T-cell (primary cell): ENCODE measurements at regions of chr5 and their contacts with region 1.

Region 1: DNA sequence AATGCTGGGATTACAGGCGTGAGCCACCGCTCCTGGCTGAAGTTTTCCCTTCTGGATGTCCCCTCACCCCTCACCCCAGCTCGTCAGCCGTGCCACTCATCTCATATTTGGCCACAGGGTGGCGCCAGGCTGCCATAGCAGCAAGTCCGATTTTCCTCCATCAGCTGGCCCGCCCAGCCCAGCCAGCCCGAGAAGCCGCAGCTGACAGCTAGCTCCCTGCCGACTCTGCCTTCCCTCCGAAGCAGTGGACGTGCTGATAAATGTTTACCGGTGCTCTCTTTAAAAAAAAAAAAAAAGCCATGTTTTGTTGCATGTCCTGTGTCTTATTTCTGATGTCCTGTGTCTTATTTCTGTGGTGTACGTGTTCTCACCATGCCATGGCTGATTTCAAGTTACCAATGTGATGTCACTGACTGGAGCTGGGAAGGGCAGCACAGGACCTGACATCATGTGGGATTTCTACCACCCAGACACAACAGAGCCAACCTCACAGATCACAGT is 58.3 kb downstream of the PFDN1 start:
- DNase-seq: peak; percentile 53 to 83 (median 71)
- ATAC-seq: peak; percentile 57 to 82 (median 74)
- H3K4me3 ChIP-seq: no peak overlapping the region
- H3K4me3 Mint-ChIP-seq: peak overlapping the region in 1 of 3 donors; percentile 50
- H3K27ac ChIP-seq: no peak overlapping the region
- H3K27ac Mint-ChIP-seq: no peak overlapping the region
- H3K4me1 ChIP-seq: peaks cover 12 to 17% of the 10 kb centered on the region in 2 experiments
- H3K4me1 Mint-ChIP-seq: peaks cover 24 to 33% (median 25%) of the 10 kb centered on the region in 3 donors
- H3K27me3 ChIP-seq: no peaks in the 10 kb centered on the region
- H3K27me3 Mint-ChIP-seq: no peaks in the 10 kb centered on the region

Region 2: DNA sequence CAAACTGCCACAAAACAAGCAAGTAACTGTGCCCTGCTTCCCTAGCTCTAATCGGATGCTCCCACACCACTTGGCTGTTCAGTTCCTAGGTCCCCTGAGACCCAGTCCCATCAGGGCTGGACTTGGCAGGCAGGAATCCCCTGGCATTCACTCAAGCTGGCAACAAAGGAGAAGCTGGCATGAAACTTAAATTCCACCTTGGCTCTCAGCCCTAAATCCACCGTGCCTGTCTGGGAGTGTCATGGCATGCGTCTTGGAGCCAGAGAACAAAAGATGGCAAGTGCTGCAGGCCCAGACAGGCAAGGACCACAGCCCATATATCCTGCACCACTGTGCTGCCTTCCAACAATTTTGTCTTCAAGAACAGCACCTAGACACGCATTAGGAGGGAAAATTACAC is 1739.8 kb before region 1 on chr5:
- CTCF ChIA-PET with region 1: no interaction called
- POLR2A ChIA-PET with region 1: no interaction called
- DNase-seq: no peak
- ATAC-seq: no peak
- H3K4me3 ChIP-seq: no peak overlapping the region
- H3K4me3 Mint-ChIP-seq: no peak overlapping the region
- H3K27ac ChIP-seq: no peak overlapping the region
- H3K27ac Mint-ChIP-seq: no peak overlapping the region
- H3K4me1 ChIP-seq: no peaks in the 10 kb centered on the region
- H3K4me1 Mint-ChIP-seq: peaks cover 0 to 2% (median 0%) of the 10 kb centered on the region in 3 donors
- H3K27me3 ChIP-seq: no peaks in the 10 kb centered on the region
- H3K27me3 Mint-ChIP-seq: no peaks in the 10 kb centered on the region

Region 3: DNA sequence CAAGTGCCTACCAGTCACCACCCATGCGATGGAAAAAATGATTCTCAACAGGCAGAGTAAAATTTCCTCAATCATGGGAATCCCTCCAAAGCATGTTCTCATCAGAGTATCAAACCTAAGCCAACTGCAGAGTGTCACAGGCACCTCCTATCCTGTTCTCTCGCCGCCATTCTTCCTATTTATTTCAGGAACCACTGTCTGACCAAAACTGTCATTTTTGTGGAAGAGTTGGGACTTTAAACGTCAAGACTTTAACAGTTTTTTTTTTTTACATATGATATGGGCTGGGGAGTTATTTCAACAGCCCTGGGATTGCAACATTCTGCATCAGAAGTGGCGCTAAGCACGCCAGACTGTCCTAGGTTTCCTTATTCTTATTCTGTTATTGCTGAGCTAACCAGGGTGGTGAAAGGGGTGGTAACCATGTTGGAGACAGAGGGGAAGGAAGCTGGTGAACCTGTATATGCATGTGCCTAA is 28.9 kb after region 1 on chr5:
- CTCF ChIA-PET with region 1: interaction called, 3 to 13 read pairs
- POLR2A ChIA-PET with region 1: no interaction called
- DNase-seq: peak in 1 of 35 experiments; percentile 21
- ATAC-seq: peak in 1 of 4 experiments; percentile 43
- H3K4me3 ChIP-seq: no peak overlapping the region
- H3K4me3 Mint-ChIP-seq: no peak overlapping the region
- H3K27ac ChIP-seq: no peak overlapping the region
- H3K27ac Mint-ChIP-seq: no peak overlapping the region
- H3K4me1 ChIP-seq: peaks cover 0 to 5% of the 10 kb centered on the region in 2 experiments
- H3K4me1 Mint-ChIP-seq: peaks cover 3 to 28% (median 19%) of the 10 kb centered on the region in 3 donors
- H3K27me3 ChIP-seq: no peaks in the 10 kb centered on the region
- H3K27me3 Mint-ChIP-seq: no peaks in the 10 kb centered on the region

Region 4: GRCh38 chr5:140302786-140303639 is 58.4 kb after region 1 on chr5 and contains the start of gene PFDN1:
- CTCF ChIA-PET with region 1: interaction called, 8 to 10 read pairs
- POLR2A ChIA-PET with region 1: no interaction called
- DNase-seq: peak; percentile 79 to 95 (median 89)
- ATAC-seq: peak; percentile 99
- H3K4me3 ChIP-seq: peak within 1 kb of the TSS; percentile 91 to 96
- H3K4me3 Mint-ChIP-seq: peak within 1 kb of the TSS; percentile 85 to 99 (median 98)
- H3K27ac ChIP-seq: peak within 1 kb of the TSS; percentile 75
- H3K27ac Mint-ChIP-seq: peak within 1 kb of the TSS; percentile 92 to 98
- H3K4me1 ChIP-seq: peaks cover 12 to 14% of the 10 kb centered on the region in 2 experiments
- H3K4me1 Mint-ChIP-seq: peaks cover 27 to 37% (median 34%) of the 10 kb centered on the region in 3 donors
- H3K27me3 ChIP-seq: peaks cover 0 to 4% of the 10 kb centered on the region in 2 experiments
- H3K27me3 Mint-ChIP-seq: peaks cover 0 to 4% of the 10 kb centered on the region in 2 donors
- total RNA-seq, gene PFDN1: 26.9 to 32.2 (median 28.1) TPM

Region 5: GRCh38 chr5:140346348-140347101 is 102.0 kb after region 1 on chr5 and contains the start of gene HBEGF:
- CTCF ChIA-PET with region 1: interaction called, 39 to 73 read pairs
- POLR2A ChIA-PET with region 1: no interaction called
- DNase-seq: peak in 31 of 35 experiments; percentile 4 to 63 (median 26)
- ATAC-seq: peak; percentile 70 to 77 (median 75)
- H3K4me3 ChIP-seq: peak within 1 kb of the TSS; percentile 48 to 73
- H3K4me3 Mint-ChIP-seq: peak within 1 kb of the TSS; percentile 66 to 81 (median 74)
- H3K27ac ChIP-seq: no peak within 1 kb of the TSS
- H3K27ac Mint-ChIP-seq: peak within 1 kb of the TSS; percentile 36 to 72
- H3K4me1 ChIP-seq: peaks cover 36 to 39% of the 10 kb centered on the region in 2 experiments
- H3K4me1 Mint-ChIP-seq: peaks cover 46 to 51% (median 49%) of the 10 kb centered on the region in 3 donors
- H3K27me3 ChIP-seq: peaks cover 0 to 22% of the 10 kb centered on the region in 2 experiments
- H3K27me3 Mint-ChIP-seq: peaks cover 0 to 10% of the 10 kb centered on the region in 2 donors
- total RNA-seq, gene HBEGF: 0.47 to 2.8 (median 1.9) TPM

Region 6: DNA sequence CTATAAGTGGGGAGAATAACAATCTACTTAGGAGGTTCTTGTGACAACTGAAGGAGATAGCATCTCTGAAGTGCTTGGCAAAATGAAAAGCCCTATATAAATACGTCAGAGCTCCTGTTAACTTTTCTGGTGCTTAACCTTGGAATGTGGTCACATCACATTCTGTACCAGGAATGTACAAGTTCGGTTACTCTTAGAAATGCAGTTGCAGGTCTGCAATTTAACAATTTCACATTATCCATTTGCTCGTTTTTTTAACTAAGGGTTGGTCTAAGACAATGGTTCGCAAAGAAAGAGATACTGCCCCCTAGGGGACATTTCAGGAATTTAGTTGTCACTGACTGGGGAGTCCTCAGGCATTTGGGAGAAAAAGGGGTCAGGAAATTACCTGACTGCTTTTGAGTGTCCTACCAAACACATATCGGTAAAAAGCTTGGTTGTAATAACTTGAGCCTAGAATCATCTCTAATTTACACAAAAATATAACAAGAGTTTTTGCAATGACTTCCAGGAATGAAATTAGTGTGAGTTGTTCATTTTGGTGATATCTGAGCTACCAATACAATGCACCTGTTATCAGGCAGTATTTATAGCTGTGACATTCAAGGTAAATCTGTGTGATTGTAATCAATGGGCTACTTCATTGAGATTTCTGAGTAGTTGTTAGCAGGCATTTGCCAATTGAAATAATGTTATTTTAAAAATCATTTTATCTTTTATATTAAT is 107.2 kb after region 1 on chr5:
- CTCF ChIA-PET with region 1: interaction called, 39 to 73 read pairs
- POLR2A ChIA-PET with region 1: no interaction called
- DNase-seq: peak in 28 of 35 experiments; percentile 9 to 87 (median 41)
- ATAC-seq: peak; percentile 82 to 93 (median 84)
- H3K4me3 ChIP-seq: no peak overlapping the region
- H3K4me3 Mint-ChIP-seq: no peak overlapping the region
- H3K27ac ChIP-seq: no peak overlapping the region
- H3K27ac Mint-ChIP-seq: no peak overlapping the region
- H3K4me1 ChIP-seq: peaks cover 6% of the 10 kb centered on the region in 2 experiments
- H3K4me1 Mint-ChIP-seq: peaks cover 12 to 15% (median 12%) of the 10 kb centered on the region in 3 donors
- H3K27me3 ChIP-seq: peaks cover 0 to 20% of the 10 kb centered on the region in 2 experiments
- H3K27me3 Mint-ChIP-seq: peaks cover 0 to 11% of the 10 kb centered on the region in 2 donors

Region 7: GRCh38 chr5:140357726-140358093 is 113.1 kb after region 1 on chr5:
- CTCF ChIA-PET with region 1: interaction called, 39 to 73 read pairs
- POLR2A ChIA-PET with region 1: no interaction called
- DNase-seq: peak in 34 of 35 experiments; percentile 40 to 84 (median 62)
- ATAC-seq: peak; percentile 90 to 96 (median 94)
- H3K4me3 ChIP-seq: no peak overlapping the region
- H3K4me3 Mint-ChIP-seq: peak overlapping the region; percentile 54 to 67 (median 62)
- H3K27ac ChIP-seq: no peak overlapping the region
- H3K27ac Mint-ChIP-seq: peak overlapping the region in 1 of 2 donors; percentile 72
- H3K4me1 ChIP-seq: peaks cover 0 to 12% of the 10 kb centered on the region in 2 experiments
- H3K4me1 Mint-ChIP-seq: peaks cover 8 to 10% (median 8%) of the 10 kb centered on the region in 3 donors
- H3K27me3 ChIP-seq: peaks cover 0 to 4% of the 10 kb centered on the region in 2 experiments
- H3K27me3 Mint-ChIP-seq: peaks cover 3 to 7% of the 10 kb centered on the region in 2 donors

Region 8: GRCh38 chr5:140381972-140382371 is 137.4 kb after region 1 on chr5:
- CTCF ChIA-PET with region 1: interaction called in 1 of 2 experiments, 10 read pairs
- POLR2A ChIA-PET with region 1: no interaction called
- DNase-seq: no peak
- ATAC-seq: no peak
- H3K4me3 ChIP-seq: no peak overlapping the region
- H3K4me3 Mint-ChIP-seq: no peak overlapping the region
- H3K27ac ChIP-seq: no peak overlapping the region
- H3K27ac Mint-ChIP-seq: no peak overlapping the region
- H3K4me1 ChIP-seq: peaks cover 0 to 5% of the 10 kb centered on the region in 2 experiments
- H3K4me1 Mint-ChIP-seq: peaks cover 3 to 7% (median 6%) of the 10 kb centered on the region in 3 donors
- H3K27me3 ChIP-seq: no peaks in the 10 kb centered on the region
- H3K27me3 Mint-ChIP-seq: no peaks in the 10 kb centered on the region